A549 (cell line): ENCODE measurements at regions of chr2 and their contacts with region 1.

Region 1: GRCh38 chr2:216498418-216499413 is at the start of gene RPL37A:
- DNase-seq: peak; percentile 91 to 97
- ATAC-seq: peak; percentile 93 to 97
- H3K4me3 ChIP-seq: peak within 1 kb of the TSS; percentile 86
- H3K27ac ChIP-seq: peak within 1 kb of the TSS; percentile 86 to 91
- H3K4me1 ChIP-seq: peaks cover 41% of the 10 kb centered on the region
- CTCF ChIP-seq: no peak
- EP300 ChIP-seq: no peak
- POLR2A ChIP-seq: peak; percentile 98
- RAD21 ChIP-seq: no peak
- polyA plus RNA-seq, gene RPL37A: 4,046 and 4,130 TPM in 2 replicates

Region 2: DNA sequence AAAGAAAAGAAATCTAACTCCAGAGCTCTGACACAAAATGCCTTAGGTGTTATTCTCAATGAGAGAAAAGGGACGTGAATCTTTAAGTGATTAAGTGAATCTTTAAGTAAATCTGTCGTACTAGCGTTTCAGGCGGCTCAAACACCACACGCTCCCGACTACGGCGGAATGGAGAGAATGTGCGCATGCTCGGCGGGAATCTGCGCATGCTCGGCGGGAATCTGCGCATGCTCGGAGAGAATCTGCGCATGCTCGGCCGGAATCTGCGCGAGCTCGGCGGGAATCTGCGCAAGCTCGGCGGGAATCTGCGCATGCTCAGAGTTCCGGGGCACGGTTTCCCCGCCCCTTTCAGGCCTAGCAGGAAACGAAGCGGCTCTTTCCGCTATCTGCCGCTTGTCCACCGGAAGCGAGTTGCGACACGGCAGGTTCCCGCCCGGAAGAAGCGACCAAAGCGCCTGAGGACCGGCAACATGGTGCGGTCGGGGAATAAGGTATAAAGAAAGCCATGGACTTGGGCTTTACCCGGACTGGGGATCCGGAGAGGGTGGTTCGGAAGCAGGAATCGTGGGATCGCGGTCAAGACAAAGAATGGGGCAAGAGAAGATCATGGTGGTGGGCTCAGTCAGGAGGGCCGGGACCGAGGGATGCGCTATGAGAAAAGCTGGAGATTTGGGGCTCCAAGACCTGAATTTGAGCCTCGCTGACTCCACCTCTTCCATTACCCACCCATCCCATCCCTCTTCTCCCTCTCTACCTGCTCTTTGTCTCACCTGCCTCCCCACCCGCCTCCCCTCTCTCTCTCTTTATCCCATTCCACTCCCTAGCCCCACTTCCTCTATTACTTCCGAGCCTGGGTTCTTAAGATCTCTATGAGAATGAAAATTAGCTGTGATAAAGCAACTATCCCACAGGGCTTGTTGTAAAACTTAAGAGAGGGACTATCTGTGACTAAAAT is 389.5 kb before region 1 on chr2 and contains the start of gene XRCC5:
- CTCF ChIA-PET with region 1: interaction called, 4 read pairs
- POLR2A ChIA-PET with region 1: interaction called, 10 read pairs
- DNase-seq: peak; percentile 74 to 98
- ATAC-seq: peak; percentile 88 to 89
- H3K4me3 ChIP-seq: peak within 1 kb of the TSS; percentile 75
- H3K27ac ChIP-seq: peak within 1 kb of the TSS; percentile 91 to 93
- H3K4me1 ChIP-seq: peaks cover 18% of the 10 kb centered on the region; the same call in 2 of the 3 replicates
- CTCF ChIP-seq: no peak
- EP300 ChIP-seq: no peak
- POLR2A ChIP-seq: peak; percentile 61
- RAD21 ChIP-seq: no peak
- polyA plus RNA-seq, gene XRCC5: 430 and 619 TPM in 2 replicates

Region 3: GRCh38 chr2:216371756-216372702 is 126.7 kb before region 1 on chr2 and contains the start of gene MARCHF4:
- CTCF ChIA-PET with region 1: no interaction called
- POLR2A ChIA-PET with region 1: interaction called, 14 read pairs
- DNase-seq: peak; percentile 48 to 78
- ATAC-seq: peak; percentile 71 to 77
- H3K4me3 ChIP-seq: peak within 1 kb of the TSS; percentile 64
- H3K27ac ChIP-seq: peak within 1 kb of the TSS; percentile 61 to 87
- H3K4me1 ChIP-seq: peaks cover 50% of the 10 kb centered on the region
- CTCF ChIP-seq: no peak
- EP300 ChIP-seq: no peak
- POLR2A ChIP-seq: no peak; the same call in 1 of the 2 replicates
- RAD21 ChIP-seq: peak; percentile 13 to 33; a peak in 3 of 5 replicates
- polyA plus RNA-seq, gene MARCHF4: 1.7 TPM in 2 replicates

Region 4: DNA sequence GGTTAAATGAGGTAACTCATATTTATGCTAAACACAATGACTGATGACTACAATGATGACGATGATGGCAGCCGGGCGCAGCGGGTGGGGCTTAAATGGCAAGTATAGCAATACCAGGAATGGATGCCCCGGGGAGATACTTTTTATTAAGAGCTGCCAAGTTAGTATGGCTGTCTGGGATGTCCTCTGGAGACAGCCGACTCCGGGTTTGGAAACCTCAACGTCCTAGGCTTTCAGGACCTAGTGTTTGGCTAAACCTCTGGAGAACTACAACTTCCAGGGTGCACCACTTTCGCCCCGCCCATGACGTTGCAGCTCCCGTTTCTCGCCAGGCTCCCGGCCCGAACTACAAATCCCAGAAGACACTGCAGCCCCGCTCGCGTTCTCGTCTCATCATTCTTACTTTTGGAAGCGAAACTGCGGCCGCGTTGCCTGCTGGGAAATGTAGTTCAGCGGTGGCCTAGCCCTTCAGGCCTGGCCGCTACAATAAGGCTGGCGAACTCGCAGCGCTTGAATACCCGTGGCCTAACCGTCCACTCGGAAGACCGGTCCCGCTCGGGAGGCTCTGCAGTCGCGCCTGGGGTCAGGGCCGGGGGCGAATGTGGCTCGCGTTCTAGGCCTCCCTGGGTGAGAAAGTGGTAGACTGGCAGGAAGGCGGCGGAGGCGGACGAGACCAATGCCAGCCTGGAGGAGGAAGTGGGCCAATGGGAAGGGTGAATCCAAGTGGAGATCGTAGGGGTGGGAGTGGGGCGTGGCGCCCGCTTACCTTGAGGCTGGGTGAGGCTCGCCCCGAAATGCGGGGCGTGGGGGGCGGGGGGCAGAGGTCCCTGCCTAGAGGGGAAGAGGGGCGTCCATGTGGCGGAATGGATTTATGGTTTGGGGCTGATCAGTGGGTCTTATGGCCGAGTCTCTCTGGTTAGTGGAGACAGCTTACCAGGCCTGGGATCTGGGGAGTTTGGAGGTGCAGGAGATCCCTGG is 86.4 kb before region 1 on chr2 and contains the start of gene SMARCAL1:
- CTCF ChIA-PET with region 1: no interaction called
- POLR2A ChIA-PET with region 1: interaction called, 15 read pairs
- DNase-seq: peak; percentile 86 to 98
- ATAC-seq: peak; percentile 96
- H3K4me3 ChIP-seq: peak within 1 kb of the TSS; percentile 64
- H3K27ac ChIP-seq: peak within 1 kb of the TSS; percentile 97 to 98
- H3K4me1 ChIP-seq: peaks cover 9% of the 10 kb centered on the region; the same call in 2 of the 3 replicates
- CTCF ChIP-seq: no peak
- EP300 ChIP-seq: no peak
- POLR2A ChIP-seq: peak; percentile 52
- RAD21 ChIP-seq: no peak
- polyA plus RNA-seq, gene SMARCAL1: 28.7 and 32.2 TPM in 2 replicates

Region 5: GRCh38 chr2:216596236-216596979 is 97.7 kb after region 1 on chr2:
- CTCF ChIA-PET with region 1: no interaction called
- POLR2A ChIA-PET with region 1: no interaction called
- DNase-seq: no peak
- ATAC-seq: no peak
- H3K4me3 ChIP-seq: no peak overlapping the region
- H3K27ac ChIP-seq: no peak overlapping the region
- H3K4me1 ChIP-seq: no peaks in the 10 kb centered on the region
- CTCF ChIP-seq: no peak
- EP300 ChIP-seq: no peak
- POLR2A ChIP-seq: no peak
- RAD21 ChIP-seq: no peak